ENCODE measurements at regions of chr7 and their contacts with region 1.

Region 1: DNA sequence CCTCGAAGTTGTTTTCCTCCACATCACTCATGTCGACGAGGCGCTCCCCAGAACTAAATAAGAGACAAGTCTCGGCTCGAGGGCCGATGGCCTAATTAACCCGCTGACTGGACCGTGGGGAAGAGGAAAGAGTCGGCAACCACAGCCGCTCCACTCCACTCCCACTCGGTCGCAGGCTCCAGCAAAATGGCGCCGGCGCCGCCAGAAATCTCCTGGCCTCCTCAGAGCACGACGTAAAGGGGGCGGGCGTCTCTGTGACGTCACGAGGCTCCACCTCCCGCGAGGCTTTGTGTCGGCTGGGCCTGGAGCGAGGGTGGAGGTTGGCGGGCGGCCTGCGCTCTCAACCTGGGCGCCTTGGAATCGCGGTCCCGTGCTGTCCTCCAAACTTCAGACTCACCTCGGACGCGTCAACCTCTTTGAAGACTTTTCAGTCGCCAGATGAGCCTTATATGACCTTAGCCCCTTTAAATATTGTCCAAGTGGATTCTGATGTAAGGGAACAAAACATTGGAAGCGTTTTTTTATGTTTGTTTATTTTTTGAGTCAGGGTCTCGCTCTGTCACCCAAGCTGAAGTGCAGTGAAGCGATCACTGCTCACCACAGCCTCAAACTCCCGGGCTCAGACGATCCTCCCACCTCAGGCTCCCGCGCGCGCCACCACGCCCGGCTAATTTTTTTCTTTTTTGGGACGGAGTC is at the start of gene TRA2A:
- DNase-seq: peak; percentile 99
- H3K4me3 Mint-ChIP-seq: peak within 1 kb of the TSS; percentile 97
- H3K27ac Mint-ChIP-seq: peak within 1 kb of the TSS; percentile 99
- H3K4me1 Mint-ChIP-seq: peaks cover 29% of the 10 kb centered on the region
- H3K27me3 Mint-ChIP-seq: no peaks in the 10 kb centered on the region
- total RNA-seq, gene TRA2A: 96.8 and 103 TPM in 2 replicates

Region 2: DNA sequence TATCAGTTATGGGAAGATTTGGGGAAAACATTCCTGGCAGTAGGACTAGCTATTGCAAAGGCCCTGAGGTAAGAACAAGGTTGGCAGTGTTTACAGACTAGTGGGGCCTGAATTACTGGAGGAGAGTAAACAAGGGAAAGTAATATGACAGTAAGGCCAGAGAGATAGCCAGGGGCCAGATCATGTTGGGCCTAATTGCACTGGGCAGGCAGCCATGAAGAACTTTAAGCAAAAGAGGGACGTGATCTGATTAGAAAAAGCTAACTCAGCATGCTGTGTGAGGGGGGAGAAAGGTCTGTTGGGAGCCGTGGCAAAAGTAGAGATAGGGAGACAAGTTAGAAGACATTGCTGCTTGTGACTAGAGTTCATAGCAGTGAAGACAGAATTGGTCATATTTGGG is 340.9 kb before region 1 on chr7:
- intact Hi-C with region 1: no loop called
- DNase-seq: peak; percentile 40
- H3K4me3 Mint-ChIP-seq: no peak overlapping the region
- H3K27ac Mint-ChIP-seq: no peak overlapping the region
- H3K4me1 Mint-ChIP-seq: peaks cover 3% of the 10 kb centered on the region
- H3K27me3 Mint-ChIP-seq: no peaks in the 10 kb centered on the region

Region 3: DNA sequence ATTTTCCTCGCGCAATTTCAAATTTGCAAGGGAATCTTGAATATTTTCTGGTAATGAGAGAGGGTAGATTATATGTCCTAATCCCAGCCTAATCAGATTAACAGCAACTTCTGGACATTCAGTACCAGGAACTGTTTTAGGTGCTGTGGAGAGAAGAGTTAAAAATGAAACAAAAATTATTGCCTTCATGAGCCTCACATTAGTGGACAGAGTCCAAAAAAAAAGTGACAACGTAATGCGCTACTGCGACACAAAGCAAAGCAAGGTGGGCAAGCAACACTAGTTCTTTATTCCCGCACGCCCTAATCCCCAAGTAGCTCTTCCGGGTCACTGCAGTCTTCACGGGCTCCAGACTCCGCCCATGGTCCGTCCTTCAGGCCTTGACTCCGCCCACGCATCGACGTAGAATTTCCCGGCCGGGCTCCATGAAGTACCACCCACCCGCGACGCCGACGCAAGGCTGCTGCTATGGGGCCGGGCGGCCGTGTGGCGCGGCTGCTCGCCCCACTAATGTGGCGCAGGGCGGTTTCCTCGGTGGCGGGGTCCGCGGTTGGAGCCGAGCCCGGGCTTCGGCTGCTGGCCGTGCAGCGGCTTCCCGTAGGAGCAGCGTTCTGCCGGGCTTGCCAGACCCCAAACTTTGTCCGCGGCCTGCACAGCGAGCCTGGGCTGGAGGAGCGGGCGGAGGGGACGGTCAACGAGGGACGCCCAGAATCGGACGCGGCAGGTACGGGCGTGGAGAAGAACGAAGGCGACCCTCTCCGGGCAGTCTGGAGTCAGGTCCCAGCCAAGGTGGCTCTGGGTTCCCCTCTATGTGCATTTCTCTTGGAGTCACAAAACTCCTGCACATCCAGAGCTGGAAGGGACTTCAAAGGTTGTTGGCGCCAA is 232.8 kb before region 1 on chr7 and contains the start of gene MALSU1:
- intact Hi-C with region 1: loop called (anchors 1 kb)
- DNase-seq: peak; percentile 99
- H3K4me3 Mint-ChIP-seq: peak within 1 kb of the TSS; percentile 93
- H3K27ac Mint-ChIP-seq: peak within 1 kb of the TSS; percentile 90
- H3K4me1 Mint-ChIP-seq: peaks cover 28% of the 10 kb centered on the region
- H3K27me3 Mint-ChIP-seq: no peaks in the 10 kb centered on the region
- total RNA-seq, gene MALSU1: 92.8 and 98.8 TPM in 2 replicates

Region 4: DNA sequence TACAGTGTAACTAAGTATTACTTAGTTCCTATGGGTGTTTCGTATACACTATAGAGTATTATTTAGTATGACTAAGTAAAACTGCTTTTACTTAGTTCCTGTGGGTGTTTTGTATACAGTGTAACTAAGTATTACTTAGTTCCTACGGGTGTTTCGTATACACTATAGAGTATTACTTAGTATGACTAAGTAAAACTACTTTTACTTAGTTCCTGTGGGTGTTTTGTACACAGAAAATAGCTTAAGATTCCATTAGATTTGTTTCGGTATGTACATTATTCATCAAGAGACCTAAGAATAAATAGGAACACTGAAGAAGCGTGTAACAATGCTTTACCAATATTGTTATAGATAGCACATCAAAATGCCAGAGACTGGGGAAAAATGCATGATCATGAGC is 86.6 kb before region 1 on chr7:
- intact Hi-C with region 1: no loop called
- DNase-seq: no peak
- H3K4me3 Mint-ChIP-seq: no peak overlapping the region
- H3K27ac Mint-ChIP-seq: no peak overlapping the region
- H3K4me1 Mint-ChIP-seq: peaks cover 2% of the 10 kb centered on the region
- H3K27me3 Mint-ChIP-seq: peaks cover 19% of the 10 kb centered on the region

Region 5: GRCh38 chr7:23462846-23463245 is 69.1 kb before region 1 on chr7:
- intact Hi-C with region 1: no loop called
- DNase-seq: peak; percentile 67
- H3K4me3 Mint-ChIP-seq: no peak overlapping the region
- H3K27ac Mint-ChIP-seq: no peak overlapping the region
- H3K4me1 Mint-ChIP-seq: peaks cover 15% of the 10 kb centered on the region
- H3K27me3 Mint-ChIP-seq: peaks cover 67% of the 10 kb centered on the region

Region 6: DNA sequence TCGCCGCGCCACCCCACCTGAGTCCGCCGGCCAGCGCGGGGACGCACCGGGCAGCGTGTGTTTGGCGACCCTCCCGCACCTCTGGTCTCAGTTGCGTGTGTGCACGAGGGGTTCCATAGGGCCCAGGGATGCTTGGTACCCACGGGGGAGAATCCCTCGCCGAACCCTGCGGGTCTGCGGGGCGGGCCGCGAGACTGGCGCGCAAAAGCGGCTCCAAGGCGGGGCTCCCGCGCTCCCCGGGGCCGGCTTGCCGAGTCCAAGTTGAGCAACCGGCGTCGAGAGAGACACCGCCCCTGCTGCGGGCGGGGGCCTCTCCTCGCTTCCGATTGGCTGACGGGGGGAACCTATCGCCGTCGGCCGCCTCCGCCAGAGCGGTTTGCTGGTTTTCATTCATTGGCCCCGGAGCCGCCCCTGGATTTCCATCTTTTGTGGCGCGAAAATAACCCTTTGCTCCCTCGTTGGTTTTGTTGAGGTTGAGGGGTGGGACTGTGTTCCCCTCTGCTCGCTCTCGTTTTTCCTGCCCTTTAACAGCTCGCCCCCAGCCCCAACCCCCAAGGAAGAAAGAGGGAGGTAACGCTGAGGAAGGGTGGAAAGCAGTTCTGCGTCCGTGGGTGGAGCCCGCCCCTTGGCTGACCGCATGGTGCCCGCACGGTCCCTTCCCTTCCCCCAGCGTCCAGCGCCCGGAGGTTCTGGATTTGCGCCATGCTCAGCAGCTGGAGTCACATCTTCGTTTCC is 57.7 kb before region 1 on chr7:
- intact Hi-C with region 1: loop called (anchors 1 kb)
- DNase-seq: peak; percentile 96
- H3K4me3 Mint-ChIP-seq: peak overlapping the region; percentile 84
- H3K27ac Mint-ChIP-seq: peak overlapping the region; percentile 75
- H3K4me1 Mint-ChIP-seq: peaks cover 27% of the 10 kb centered on the region
- H3K27me3 Mint-ChIP-seq: peaks cover 60% of the 10 kb centered on the region

Region 7: DNA sequence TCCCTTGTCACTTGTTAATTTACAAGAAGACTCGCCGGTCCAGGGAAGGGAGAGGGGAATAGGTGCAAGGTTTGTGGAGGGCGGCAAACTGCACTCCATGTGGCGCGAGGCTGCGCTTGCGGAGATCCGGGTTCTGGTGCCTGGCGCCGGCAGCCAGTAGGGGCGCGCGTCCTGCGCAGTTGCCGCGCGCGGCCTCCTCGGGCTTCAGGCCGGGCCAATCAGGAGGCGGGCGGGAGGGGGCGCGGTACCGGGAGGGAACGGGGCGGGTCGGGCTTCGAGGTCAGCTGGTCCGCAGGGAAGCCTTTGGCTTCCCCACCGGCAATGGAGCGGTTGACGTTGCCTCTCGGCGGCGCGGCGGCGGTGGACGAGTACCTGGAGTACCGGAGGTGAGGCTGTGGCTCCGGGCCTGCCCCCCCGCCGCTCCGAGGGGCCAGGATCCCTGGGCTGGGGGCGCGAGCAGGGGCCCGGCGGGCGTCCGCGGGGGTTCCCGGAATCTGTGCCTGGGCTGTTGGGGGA is 148.0 kb after region 1 on chr7 and contains the start of gene FAM221A:
- intact Hi-C with region 1: loop called (anchors 5 kb)
- DNase-seq: peak; percentile 93
- H3K4me3 Mint-ChIP-seq: peak within 1 kb of the TSS; percentile 91
- H3K27ac Mint-ChIP-seq: peak within 1 kb of the TSS; percentile 66
- H3K4me1 Mint-ChIP-seq: peaks cover 9% of the 10 kb centered on the region
- H3K27me3 Mint-ChIP-seq: peaks cover 13% of the 10 kb centered on the region
- total RNA-seq, gene FAM221A: 6.6 TPM in 2 replicates